ENCODE measurements at regions of chr6 and their contacts with region 1.

Region 1: GRCh38 chr6:43075670-43076463 is at the start of gene PTK7:
- DNase-seq: peak in 1 of 2 experiments; percentile 88
- H3K4me3 ChIP-seq: peak within 1 kb of the TSS; percentile 84 to 95 (median 94)
- H3K27ac ChIP-seq: peak within 1 kb of the TSS; percentile 77; the same call in 1 of the 2 replicates
- H3K4me1 ChIP-seq: peaks cover 6 to 17% (median 12%) of the 10 kb centered on the region in 4 experiments; a peak in 6 of 7 replicates
- H3K27me3 ChIP-seq: 0 out of 7 replicates have a peak, but pooled peaks cover 0 to 2% (median 0%) of the 10 kb centered on the region in 4 experiments
- CTCF ChIP-seq: no peak
- EP300 ChIP-seq: no peak; a peak in 1 of 3 replicates
- POLR2A ChIP-seq: no peak; a peak in 1 of 3 replicates
- RAD21 ChIP-seq: no peak
- total RNA-seq, gene PTK7: 130 and 138 TPM in 2 replicates

Region 2: GRCh38 chr6:42332916-42333315 is 743.0 kb before region 1 on chr6:
- CTCF ChIA-PET with region 1: no interaction called
- POLR2A ChIA-PET with region 1: no interaction called
- DNase-seq: no peak
- H3K4me3 ChIP-seq: no peak overlapping the region
- H3K27ac ChIP-seq: no peak overlapping the region
- H3K4me1 ChIP-seq: peaks cover 0 to 4% (median 1%) of the 10 kb centered on the region in 4 experiments; a peak in 2 of 7 replicates
- H3K27me3 ChIP-seq: no peaks in the 10 kb centered on the region
- CTCF ChIP-seq: no peak
- EP300 ChIP-seq: no peak
- POLR2A ChIP-seq: no peak
- RAD21 ChIP-seq: no peak

Region 3: DNA sequence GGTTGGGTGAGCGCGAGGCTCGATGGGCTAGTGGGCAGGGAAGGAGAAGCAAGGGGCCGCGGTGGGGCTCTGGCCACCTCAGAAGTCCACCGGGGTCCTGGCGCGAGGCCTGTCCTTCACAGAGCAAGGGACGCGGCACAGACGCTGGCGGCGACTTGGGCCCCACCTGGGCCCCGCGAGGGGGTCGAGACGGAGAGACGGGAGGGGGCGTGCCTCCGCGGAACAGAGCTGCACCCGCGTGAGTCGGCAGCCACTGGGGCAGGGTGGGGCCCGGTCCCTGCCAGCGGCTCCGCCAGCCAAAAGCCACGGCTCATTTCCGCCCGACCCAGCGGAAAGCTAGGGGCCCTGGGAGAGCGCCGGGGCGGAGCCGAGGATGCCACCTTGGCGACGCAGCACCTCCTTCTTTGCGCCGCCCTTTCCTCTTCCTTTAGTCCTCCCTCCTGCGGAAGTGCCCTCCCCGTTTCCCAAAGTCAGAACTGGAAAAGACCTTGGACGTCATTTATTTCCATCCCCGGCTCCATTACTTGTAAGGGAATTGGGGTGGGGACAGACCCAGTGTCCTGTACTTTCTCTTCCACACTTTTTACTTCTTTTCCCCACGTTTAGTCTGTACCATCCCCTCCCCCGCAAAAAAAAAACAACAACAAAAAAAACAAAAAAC is 22.2 kb before region 1 on chr6 and contains the start of gene CUL7:
- CTCF ChIA-PET with region 1: interaction called, 5 read pairs
- POLR2A ChIA-PET with region 1: interaction called, 43 read pairs
- DNase-seq: peak; percentile 73 to 88
- H3K4me3 ChIP-seq: peak within 1 kb of the TSS; percentile 72 to 91 (median 78)
- H3K27ac ChIP-seq: peak within 1 kb of the TSS; percentile 87
- H3K4me1 ChIP-seq: peaks cover 4 to 15% (median 7%) of the 10 kb centered on the region in 4 experiments; a peak in 6 of 7 replicates
- H3K27me3 ChIP-seq: no peaks in the 10 kb centered on the region
- CTCF ChIP-seq: no peak
- EP300 ChIP-seq: no peak
- POLR2A ChIP-seq: peak in 1 of 2 experiments; percentile 92; a peak in 2 of 3 replicates
- RAD21 ChIP-seq: 0 out of 4 replicates have a peak, but pooled peaks of 1 of the 2 experiments have one; percentile 0
- total RNA-seq, gene CUL7: 10.8 and 11.4 TPM in 2 replicates

Region 4: GRCh38 chr6:43059168-43060033 is 16.5 kb before region 1 on chr6 and contains the starts of genes KLC4 and MRPL2:
- CTCF ChIA-PET with region 1: interaction called, 7 read pairs
- POLR2A ChIA-PET with region 1: interaction called, 43 read pairs
- DNase-seq: peak; percentile 94 to 99
- H3K4me3 ChIP-seq: peak within 1 kb of the TSS; percentile 90 to 99 (median 98)
- H3K27ac ChIP-seq: peak within 1 kb of the TSS; percentile 89
- H3K4me1 ChIP-seq: peaks cover 4 to 10% (median 5%) of the 10 kb centered on the region in 4 experiments; a peak in 5 of 7 replicates
- H3K27me3 ChIP-seq: no peaks in the 10 kb centered on the region
- CTCF ChIP-seq: no peak
- EP300 ChIP-seq: 0 out of 3 replicates have a peak, but pooled peaks of 1 of the 2 experiments have one; percentile 10
- POLR2A ChIP-seq: peak in 1 of 2 experiments; percentile 98; a peak in 2 of 3 replicates
- RAD21 ChIP-seq: 0 out of 4 replicates have a peak, but pooled peaks of 1 of the 2 experiments have one; percentile 8
- total RNA-seq, gene KLC4: 27.7 and 28.5 TPM in 2 replicates
- total RNA-seq, gene MRPL2: 97.7 and 99.9 TPM in 2 replicates

Region 5: GRCh38 chr6:43089874-43090558 is 14.1 kb after region 1 on chr6:
- CTCF ChIA-PET with region 1: interaction called, 17 read pairs
- POLR2A ChIA-PET with region 1: interaction called, 28 read pairs
- DNase-seq: peak in 1 of 2 experiments; percentile 57
- H3K4me3 ChIP-seq: peak overlapping the region; percentile 19 to 46 (median 31); a peak in 7 of 8 replicates
- H3K27ac ChIP-seq: peak overlapping the region; percentile 81
- H3K4me1 ChIP-seq: peaks cover 18 to 33% (median 26%) of the 10 kb centered on the region in 4 experiments
- H3K27me3 ChIP-seq: no peaks in the 10 kb centered on the region
- CTCF ChIP-seq: no peak
- EP300 ChIP-seq: no peak
- POLR2A ChIP-seq: no peak
- RAD21 ChIP-seq: no peak

Region 6: DNA sequence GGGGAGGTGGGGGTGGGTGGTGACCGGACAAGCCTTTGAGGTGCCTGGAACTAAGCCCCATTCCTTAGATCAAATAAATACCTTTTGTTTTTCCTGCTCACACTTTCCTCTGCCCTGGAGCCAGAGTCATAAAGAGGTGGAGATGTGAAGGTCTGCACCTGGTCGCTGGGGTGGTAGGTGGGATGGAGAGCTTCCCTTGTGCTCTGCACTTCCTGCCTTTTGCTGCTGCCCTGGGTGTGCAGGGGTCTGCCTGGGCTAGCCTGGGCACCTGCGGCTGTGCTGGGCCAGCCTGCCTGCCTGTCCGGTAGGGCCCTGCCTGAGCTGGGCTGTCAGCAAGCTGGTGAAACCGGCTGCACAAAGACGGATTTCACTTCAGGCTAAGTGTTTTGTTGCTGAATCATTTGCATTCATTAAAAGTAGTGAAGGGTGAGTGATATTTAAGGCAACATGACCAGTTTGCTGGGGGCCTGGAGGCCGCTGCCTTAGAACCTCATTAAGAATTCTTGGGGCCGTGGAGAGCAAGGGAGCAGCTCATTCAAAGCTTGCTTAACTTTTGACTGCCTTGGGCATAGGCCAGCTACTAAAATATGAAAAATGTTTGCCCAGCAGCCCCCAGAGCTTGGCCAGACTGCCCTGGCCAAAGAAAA is 20.7 kb after region 1 on chr6:
- CTCF ChIA-PET with region 1: interaction called, 17 read pairs
- POLR2A ChIA-PET with region 1: interaction called, 28 read pairs
- DNase-seq: no peak
- H3K4me3 ChIP-seq: no peak overlapping the region
- H3K27ac ChIP-seq: peak overlapping the region; percentile 40; the same call in 1 of the 2 replicates
- H3K4me1 ChIP-seq: peaks cover 10 to 23% (median 14%) of the 10 kb centered on the region in 4 experiments; a peak in 6 of 7 replicates
- H3K27me3 ChIP-seq: no peaks in the 10 kb centered on the region
- CTCF ChIP-seq: no peak
- EP300 ChIP-seq: no peak
- POLR2A ChIP-seq: no peak
- RAD21 ChIP-seq: no peak

Region 7: GRCh38 chr6:43120944-43121913 is 45.4 kb after region 1 on chr6:
- CTCF ChIA-PET with region 1: interaction called, 29 read pairs
- POLR2A ChIA-PET with region 1: interaction called, 11 read pairs
- DNase-seq: no peak
- H3K4me3 ChIP-seq: no peak overlapping the region
- H3K27ac ChIP-seq: no peak overlapping the region
- H3K4me1 ChIP-seq: peaks cover 2 to 17% (median 9%) of the 10 kb centered on the region in 4 experiments
- H3K27me3 ChIP-seq: no peaks in the 10 kb centered on the region
- CTCF ChIP-seq: no peak
- EP300 ChIP-seq: no peak
- POLR2A ChIP-seq: no peak
- RAD21 ChIP-seq: peak in 1 of 2 experiments; percentile 11; a peak in 1 of 4 replicates

Region 8: GRCh38 chr6:43129434-43130194 is 53.7 kb after region 1 on chr6:
- CTCF ChIA-PET with region 1: interaction called, 29 read pairs
- POLR2A ChIA-PET with region 1: interaction called, 9 read pairs
- DNase-seq: peak in 1 of 2 experiments; percentile 63
- H3K4me3 ChIP-seq: no peak overlapping the region
- H3K27ac ChIP-seq: no peak overlapping the region
- H3K4me1 ChIP-seq: peaks cover 0 to 14% (median 5%) of the 10 kb centered on the region in 4 experiments
- H3K27me3 ChIP-seq: no peaks in the 10 kb centered on the region
- CTCF ChIP-seq: peak; percentile 72 to 82 (median 80)
- EP300 ChIP-seq: no peak
- POLR2A ChIP-seq: no peak
- RAD21 ChIP-seq: peak; percentile 91 to 92

Measured in H1 (cell line).